ENCODE measurements at regions of chr10 and their contacts with region 1.

Region 1: GRCh38 chr10:120942806-120943413 is 91.7 kb downstream of the WDR11 start:
- DNase-seq: peak; percentile 76 to 87 (median 81)
- H3K4me3 ChIP-seq: no peak overlapping the region
- H3K27ac ChIP-seq: no peak overlapping the region
- H3K4me1 ChIP-seq: no peaks in the 10 kb centered on the region
- H3K27me3 ChIP-seq: no peaks in the 10 kb centered on the region
- CTCF ChIP-seq: peak; percentile 74 to 88 (median 77)
- EP300 ChIP-seq: no peak
- POLR2A ChIP-seq: no peak

Region 2: GRCh38 chr10:119947300-119947699 is 995.6 kb before region 1 on chr10:
- intact Hi-C with region 1: no loop called
- DNase-seq: no peak
- H3K4me3 ChIP-seq: no peak overlapping the region
- H3K27ac ChIP-seq: no peak overlapping the region
- H3K4me1 ChIP-seq: no peaks in the 10 kb centered on the region
- H3K27me3 ChIP-seq: no peaks in the 10 kb centered on the region
- CTCF ChIP-seq: no peak
- EP300 ChIP-seq: no peak
- POLR2A ChIP-seq: no peak

Region 3: GRCh38 chr10:120905268-120905667 is 37.6 kb before region 1 on chr10:
- intact Hi-C with region 1: no loop called
- DNase-seq: no peak
- H3K4me3 ChIP-seq: no peak overlapping the region
- H3K27ac ChIP-seq: no peak overlapping the region
- H3K4me1 ChIP-seq: no peaks in the 10 kb centered on the region
- H3K27me3 ChIP-seq: no peaks in the 10 kb centered on the region
- CTCF ChIP-seq: no peak
- EP300 ChIP-seq: no peak
- POLR2A ChIP-seq: no peak

Region 4: DNA sequence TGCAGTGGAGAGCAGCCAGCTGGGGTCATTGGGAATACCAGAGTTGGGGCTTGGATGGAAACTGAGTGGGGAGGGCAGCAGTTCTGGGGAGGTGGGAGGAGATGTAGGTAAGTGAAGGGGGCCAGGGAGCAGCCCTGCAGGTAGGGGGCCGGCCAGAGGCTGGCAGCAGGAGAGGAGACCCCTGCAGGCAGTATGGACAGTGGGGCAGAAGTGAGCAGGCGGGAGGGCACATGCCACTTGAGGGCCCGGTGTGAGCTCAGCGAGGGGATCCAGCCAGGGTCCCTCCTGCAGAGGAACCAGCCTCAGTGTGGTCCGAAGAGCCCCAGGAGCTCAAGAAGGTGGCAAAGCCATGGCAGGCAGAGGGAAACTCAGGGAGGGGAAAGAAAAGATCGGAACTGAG is 16.3 kb before region 1 on chr10:
- intact Hi-C with region 1: no loop called
- DNase-seq: no peak
- H3K4me3 ChIP-seq: no peak overlapping the region
- H3K27ac ChIP-seq: no peak overlapping the region
- H3K4me1 ChIP-seq: no peaks in the 10 kb centered on the region
- H3K27me3 ChIP-seq: no peaks in the 10 kb centered on the region
- CTCF ChIP-seq: no peak
- EP300 ChIP-seq: no peak
- POLR2A ChIP-seq: no peak

Region 5: GRCh38 chr10:121886997-121887622 is 944.2 kb after region 1 on chr10:
- intact Hi-C with region 1: loop called in 1 of 4 experiments (anchors 5 kb)
- DNase-seq: peak in 4 of 5 donors; percentile 28 to 45 (median 32)
- H3K4me3 ChIP-seq: no peak overlapping the region
- H3K27ac ChIP-seq: no peak overlapping the region
- H3K4me1 ChIP-seq: no peaks in the 10 kb centered on the region
- H3K27me3 ChIP-seq: no peaks in the 10 kb centered on the region
- CTCF ChIP-seq: peak in 2 of 3 donors; percentile 18 to 34
- EP300 ChIP-seq: no peak
- POLR2A ChIP-seq: no peak

Region 6: DNA sequence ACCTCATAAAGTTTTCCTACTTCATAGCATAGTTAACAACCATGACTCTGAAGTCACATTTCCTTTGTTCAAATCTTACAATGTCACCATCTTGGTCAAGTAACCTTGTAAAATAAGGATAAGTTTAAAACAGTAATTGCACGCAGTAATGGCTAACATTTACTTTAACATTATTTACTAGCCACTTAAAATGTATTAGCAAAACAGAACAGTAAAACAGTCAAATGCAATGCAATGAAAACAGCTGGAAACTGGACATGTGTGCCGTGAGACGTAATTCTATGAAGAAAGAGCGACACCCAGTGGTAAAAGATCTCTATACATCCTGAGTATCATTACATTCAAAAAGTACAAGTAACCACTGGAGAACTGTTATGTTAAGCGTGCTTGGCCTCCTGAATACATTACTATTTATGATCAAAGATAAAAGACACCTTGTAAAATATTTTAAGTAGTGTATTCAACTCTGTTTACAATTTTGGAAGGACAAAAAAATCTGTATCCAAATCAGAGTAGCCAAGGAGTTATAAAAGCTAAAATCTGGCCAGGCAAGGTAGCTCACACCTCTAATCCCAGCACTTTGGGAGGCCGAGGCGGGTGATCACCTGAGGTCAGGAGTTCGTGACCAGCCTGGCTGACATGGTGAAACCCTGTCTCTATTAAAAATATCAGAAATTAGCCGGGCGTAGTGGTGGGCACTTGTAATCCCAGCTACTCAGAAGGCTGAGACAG is 957.7 kb after region 1 on chr10:
- intact Hi-C with region 1: loop called (anchors 5 to 10 kb)
- DNase-seq: no peak
- H3K4me3 ChIP-seq: no peak overlapping the region
- H3K27ac ChIP-seq: no peak overlapping the region
- H3K4me1 ChIP-seq: no peaks in the 10 kb centered on the region
- H3K27me3 ChIP-seq: no peaks in the 10 kb centered on the region
- CTCF ChIP-seq: peak; percentile 41 to 60 (median 55)
- EP300 ChIP-seq: no peak
- POLR2A ChIP-seq: no peak

Measured in ovary (tissue), 10 donors.